Activated T-helper 1 cell treated with anti-CD3 and anti-CD28 coated beads, Interleukin-12 subunit alpha, Interleukin-12 subunit beta, Interleukin-2, Interleukin-4 antibody, amounts not matched to agents 30 ng/mL and 10 ng/mL and 1 ng/mL, durations not matched to agents 14 hours and 24 hours and 36 hours (primary cell): ENCODE measurements at regions of chr1 and their contacts with region 1.

Region 1: DNA sequence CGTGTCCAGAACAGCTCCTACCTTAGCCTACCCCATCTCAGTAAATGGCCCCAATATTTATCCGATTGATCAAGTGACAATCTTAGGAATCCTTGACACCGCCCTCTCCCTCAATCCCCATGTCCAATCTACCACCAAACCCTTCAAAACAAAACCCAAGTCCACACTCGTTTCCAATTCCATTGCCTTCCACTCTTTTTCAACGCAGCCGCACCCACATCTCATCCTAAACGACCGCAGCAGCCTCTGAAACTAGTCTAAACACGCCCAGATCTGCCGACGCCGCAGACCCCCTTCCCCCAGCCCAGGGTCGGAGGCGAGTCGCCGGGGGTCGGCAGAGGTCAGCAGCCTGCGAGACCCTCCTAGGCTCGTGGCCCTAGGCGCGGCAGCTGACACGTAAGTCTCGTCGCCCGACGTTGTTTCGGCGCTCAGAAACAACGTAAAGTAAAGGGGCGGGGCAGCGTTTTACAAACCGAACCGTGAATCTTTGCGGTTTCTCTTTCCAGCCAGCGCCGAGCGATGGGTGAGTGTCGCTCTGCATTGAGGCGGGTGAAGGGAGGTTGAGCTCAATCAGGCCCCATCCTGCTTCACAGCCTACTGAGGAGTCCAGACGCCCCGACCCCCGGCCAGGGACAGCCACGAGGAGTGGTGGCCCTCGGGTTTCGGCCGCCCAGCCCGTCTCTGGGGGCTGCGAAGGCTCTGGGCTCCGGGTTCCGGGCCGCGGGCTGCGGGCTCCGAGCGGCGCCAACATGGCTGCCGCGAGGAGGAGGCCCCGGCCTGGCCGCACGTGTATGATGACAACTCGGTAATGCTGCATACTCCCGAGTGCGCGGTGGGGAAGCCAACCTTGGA is at the start of gene RPS8:
- DNase-seq: peak; percentile 85
- H3K4me3 Mint-ChIP-seq: peak within 1 kb of the TSS; percentile 88
- H3K27ac Mint-ChIP-seq: peak within 1 kb of the TSS; percentile 93
- H3K4me1 Mint-ChIP-seq: peaks cover 23% of the 10 kb centered on the region
- H3K27me3 Mint-ChIP-seq: no peaks in the 10 kb centered on the region
- total RNA-seq, gene RPS8: 2,172 and 2,226 TPM in 2 replicates

Region 2: GRCh38 chr1:44739361-44740178 is 35.7 kb before region 1 on chr1 and contains the start of gene KIF2C:
- intact Hi-C with region 1: loop called (anchors 1 kb)
- DNase-seq: peak; percentile 95
- H3K4me3 Mint-ChIP-seq: peak within 1 kb of the TSS; percentile 92
- H3K27ac Mint-ChIP-seq: peak within 1 kb of the TSS; percentile 90
- H3K4me1 Mint-ChIP-seq: peaks cover 37% of the 10 kb centered on the region
- H3K27me3 Mint-ChIP-seq: no peaks in the 10 kb centered on the region
- total RNA-seq, gene KIF2C: 68.7 and 72.9 TPM in 2 replicates

Region 3: DNA sequence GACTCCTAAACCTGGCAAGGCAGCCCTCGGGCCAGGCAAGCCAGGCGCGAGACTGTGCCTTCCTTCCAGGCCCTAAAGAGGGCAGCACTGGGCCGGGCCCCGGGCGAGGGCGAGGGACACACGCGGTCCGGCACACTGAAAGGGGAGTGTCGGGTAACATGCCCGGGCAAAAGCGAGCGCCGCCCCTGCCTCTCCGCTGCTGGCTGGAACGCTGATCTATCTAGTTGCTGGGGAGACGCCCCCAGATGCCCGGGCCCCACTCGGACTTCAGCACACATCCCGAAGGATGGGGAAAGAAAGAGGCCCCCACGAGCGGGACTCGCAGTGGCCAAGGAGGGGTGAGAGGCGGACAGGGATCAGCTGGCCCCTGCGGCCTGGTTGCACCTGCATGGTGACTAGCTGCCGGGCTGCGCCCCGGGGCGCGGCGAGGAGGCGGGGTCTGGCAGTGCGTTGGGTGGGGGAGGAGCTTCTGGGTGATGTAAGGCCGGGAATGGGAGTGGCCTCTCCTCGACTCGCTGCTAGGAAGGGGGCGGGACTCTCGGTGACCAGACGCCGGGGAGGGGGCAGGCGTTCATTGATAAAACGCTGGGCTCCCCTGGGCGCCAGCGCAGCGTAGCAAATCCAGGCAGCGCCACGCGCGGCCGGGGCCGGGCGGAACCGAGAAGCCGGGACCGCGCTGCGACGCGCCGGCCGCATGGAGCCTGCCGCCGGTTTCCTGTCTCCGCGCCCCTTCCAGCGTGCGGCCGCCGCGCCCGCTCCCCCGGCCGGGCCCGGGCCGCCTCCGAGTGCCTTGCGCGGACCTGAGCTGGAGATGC is 24.7 kb after region 1 on chr1 and contains the start of gene PLK3:
- intact Hi-C with region 1: loop called (anchors 2 kb)
- DNase-seq: peak; percentile 97
- H3K4me3 Mint-ChIP-seq: peak within 1 kb of the TSS; percentile 97
- H3K27ac Mint-ChIP-seq: peak within 1 kb of the TSS; percentile 99
- H3K4me1 Mint-ChIP-seq: peaks cover 35% of the 10 kb centered on the region
- H3K27me3 Mint-ChIP-seq: no peaks in the 10 kb centered on the region
- total RNA-seq, gene PLK3: 208 and 211 TPM in 2 replicates

Region 4: GRCh38 chr1:44812822-44813543 is 37.7 kb after region 1 on chr1:
- intact Hi-C with region 1: loop called (anchors 1 kb)
- DNase-seq: no peak
- H3K4me3 Mint-ChIP-seq: no peak overlapping the region
- H3K27ac Mint-ChIP-seq: peak overlapping the region; percentile 67
- H3K4me1 Mint-ChIP-seq: peaks cover 75% of the 10 kb centered on the region
- H3K27me3 Mint-ChIP-seq: no peaks in the 10 kb centered on the region